Heart left ventricle (tissue), 16 donors: ENCODE measurements at regions of chr4 and their contacts with region 1.

Region 1: DNA sequence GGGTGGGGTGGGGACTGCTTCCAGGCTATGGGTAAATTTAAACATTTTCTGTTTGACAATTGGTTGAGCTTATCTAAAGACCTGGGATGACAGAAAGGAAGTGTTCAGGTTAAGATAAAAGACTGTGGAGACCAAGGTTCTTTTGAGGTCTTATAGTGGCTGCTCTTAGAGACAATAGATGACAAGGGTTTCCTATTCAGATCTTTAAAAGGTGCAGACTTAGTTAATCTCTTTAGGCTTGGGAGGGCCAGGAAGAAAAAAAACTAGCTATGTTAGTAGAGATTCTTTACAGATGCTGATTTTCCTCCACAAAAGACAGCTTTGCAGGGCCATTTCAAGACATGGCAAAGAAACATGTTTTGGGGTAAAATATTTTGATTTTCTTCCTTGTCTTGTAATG is 972.5 kb downstream of the CCSER1 start:
- DNase-seq: no peak
- ATAC-seq: no peak
- H3K4me3 ChIP-seq: no peak overlapping the region
- H3K27ac ChIP-seq: no peak overlapping the region
- H3K4me1 ChIP-seq: no peaks in the 10 kb centered on the region
- H3K27me3 ChIP-seq: no peaks in the 10 kb centered on the region
- CTCF ChIP-seq: no peak
- POLR2A ChIP-seq: no peak

Region 2: DNA sequence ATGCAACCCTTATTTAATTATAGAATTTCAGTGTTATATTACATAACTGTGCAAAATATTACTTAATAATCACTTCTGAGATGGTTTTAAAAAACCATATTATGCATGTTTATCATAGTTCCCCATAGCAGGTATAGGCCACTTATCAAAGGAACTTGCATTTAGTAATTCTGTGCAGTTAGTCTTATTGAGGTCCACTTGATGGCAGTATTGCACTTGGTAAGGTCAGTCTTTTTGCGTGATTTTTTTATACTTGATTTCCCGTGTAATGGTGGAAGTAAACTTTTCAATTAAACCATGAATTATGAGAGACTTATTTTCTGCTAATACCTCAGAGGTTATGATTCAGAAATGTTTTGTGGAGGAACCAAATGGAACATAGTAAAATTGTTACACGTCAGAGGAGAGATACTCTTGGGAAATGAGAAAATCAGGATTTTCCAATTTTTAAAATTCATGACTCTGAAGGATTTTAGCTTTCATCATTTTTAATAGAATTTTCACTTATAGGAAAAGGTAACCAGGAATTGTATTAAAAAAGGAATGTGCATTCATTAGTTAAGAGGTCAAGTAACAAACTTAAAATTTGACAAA is 742.5 kb before region 1 on chr4:
- intact Hi-C with region 1: loop called in 1 of 10 experiments (anchors 10 kb)
- DNase-seq: no peak
- ATAC-seq: peak in 1 of 4 donors; percentile 46
- H3K4me3 ChIP-seq: peak overlapping the region in 2 of 12 donors; percentile 6 to 9
- H3K27ac ChIP-seq: no peak overlapping the region
- H3K4me1 ChIP-seq: no peaks in the 10 kb centered on the region
- H3K27me3 ChIP-seq: no peaks in the 10 kb centered on the region
- CTCF ChIP-seq: peak; percentile 21 to 57 (median 42)
- POLR2A ChIP-seq: no peak